Transverse colon (tissue), 4 donors: ENCODE measurements at regions of chr17 and their contacts with region 1.

Region 1: GRCh38 chr17:34637548-34638525 is 58.5 kb downstream of the TMEM132E start:
- DNase-seq: peak; percentile 76
- H3K4me3 ChIP-seq: peak overlapping the region in 3 of 4 donors; percentile 5 to 39 (median 23)
- H3K27ac ChIP-seq: no peak overlapping the region
- H3K4me1 ChIP-seq: peaks cover 0 to 7% (median 3%) of the 10 kb centered on the region in 4 donors
- H3K27me3 ChIP-seq: peaks cover 44% of the 10 kb centered on the region
- CTCF ChIP-seq: peak; percentile 71 to 90 (median 80)
- EP300 ChIP-seq: no peak
- POLR2A ChIP-seq: no peak

Region 2: DNA sequence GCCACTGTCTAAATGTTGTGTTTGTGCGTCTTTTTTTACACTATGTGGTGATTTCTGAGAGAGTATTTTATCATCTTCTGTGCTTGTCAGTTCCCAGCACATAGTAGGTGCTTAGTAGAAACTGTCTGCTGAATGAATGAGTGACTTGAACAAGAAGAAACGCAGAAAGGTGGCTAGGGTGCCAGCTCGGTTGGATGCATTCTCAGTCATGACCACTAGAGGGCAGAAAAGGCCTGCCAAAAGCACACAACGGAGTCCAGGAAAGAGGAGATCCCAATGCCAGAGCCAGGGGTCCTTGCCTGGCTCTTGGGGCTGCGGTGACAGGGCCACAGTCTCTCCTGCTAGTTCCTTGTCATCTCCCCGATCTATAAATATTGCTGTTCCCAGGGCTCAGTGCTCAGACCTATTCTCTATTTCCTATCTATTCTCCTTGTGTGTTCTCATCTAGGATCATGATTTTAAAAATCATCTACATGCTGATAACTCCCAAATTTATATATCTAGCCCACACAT is 217.5 kb before region 1 on chr17:
- in situ Hi-C with region 1: loop called in 3 of 4 experiments (anchors 5 to 25 kb)
- intact Hi-C with region 1: loop called (anchors 2 kb)
- DNase-seq: peak; percentile 67
- H3K4me3 ChIP-seq: no peak overlapping the region
- H3K27ac ChIP-seq: no peak overlapping the region
- H3K4me1 ChIP-seq: peaks cover 0 to 3% (median 0%) of the 10 kb centered on the region in 4 donors
- H3K27me3 ChIP-seq: peaks cover 49% of the 10 kb centered on the region
- CTCF ChIP-seq: peak; percentile 84 to 97 (median 95)
- EP300 ChIP-seq: no peak
- POLR2A ChIP-seq: no peak

Region 3: DNA sequence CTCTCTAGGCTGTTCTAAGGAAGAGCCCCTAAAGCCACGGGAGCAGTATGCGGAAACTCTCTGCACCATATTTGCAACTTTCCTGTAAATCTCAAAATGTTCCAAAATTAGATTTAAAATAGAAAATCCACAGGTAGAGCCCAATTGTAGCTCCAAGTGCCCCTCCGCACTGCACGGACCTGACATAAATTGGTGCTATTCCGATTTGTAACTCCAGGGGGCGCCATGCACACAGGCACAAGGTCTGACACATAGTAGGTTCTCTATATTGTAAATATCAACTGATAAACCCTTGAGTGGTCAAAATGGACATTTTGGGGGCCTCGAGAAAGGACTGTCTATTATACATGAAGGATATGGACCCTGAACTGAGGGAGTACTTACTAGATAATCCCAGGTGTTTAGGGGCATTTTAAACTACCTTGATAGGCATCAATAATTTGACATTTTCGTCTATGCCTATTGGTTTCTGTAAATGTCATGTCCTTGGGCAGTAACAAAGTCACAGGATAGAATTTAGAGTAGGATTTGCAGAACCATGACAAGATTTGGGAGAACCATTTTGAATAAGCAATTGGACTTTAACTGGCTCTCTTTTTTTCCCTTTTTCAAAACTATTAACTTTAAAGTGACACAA is 95.0 kb before region 1 on chr17:
- in situ Hi-C with region 1: no loop called
- intact Hi-C with region 1: loop called (anchors 1 kb)
- DNase-seq: peak; percentile 25
- H3K4me3 ChIP-seq: no peak overlapping the region
- H3K27ac ChIP-seq: no peak overlapping the region
- H3K4me1 ChIP-seq: no peaks in the 10 kb centered on the region
- H3K27me3 ChIP-seq: peaks cover 24% of the 10 kb centered on the region
- CTCF ChIP-seq: peak; percentile 65 to 77 (median 75)
- EP300 ChIP-seq: no peak
- POLR2A ChIP-seq: no peak